ENCODE measurements at regions of chr15 and their contacts with region 1.

Region 1: GRCh38 chr15:90603893-90604292 is 74.2 kb downstream of the CRTC3 start:
- DNase-seq: no peak
- CTCF ChIP-seq: peak; percentile 31

Region 2: DNA sequence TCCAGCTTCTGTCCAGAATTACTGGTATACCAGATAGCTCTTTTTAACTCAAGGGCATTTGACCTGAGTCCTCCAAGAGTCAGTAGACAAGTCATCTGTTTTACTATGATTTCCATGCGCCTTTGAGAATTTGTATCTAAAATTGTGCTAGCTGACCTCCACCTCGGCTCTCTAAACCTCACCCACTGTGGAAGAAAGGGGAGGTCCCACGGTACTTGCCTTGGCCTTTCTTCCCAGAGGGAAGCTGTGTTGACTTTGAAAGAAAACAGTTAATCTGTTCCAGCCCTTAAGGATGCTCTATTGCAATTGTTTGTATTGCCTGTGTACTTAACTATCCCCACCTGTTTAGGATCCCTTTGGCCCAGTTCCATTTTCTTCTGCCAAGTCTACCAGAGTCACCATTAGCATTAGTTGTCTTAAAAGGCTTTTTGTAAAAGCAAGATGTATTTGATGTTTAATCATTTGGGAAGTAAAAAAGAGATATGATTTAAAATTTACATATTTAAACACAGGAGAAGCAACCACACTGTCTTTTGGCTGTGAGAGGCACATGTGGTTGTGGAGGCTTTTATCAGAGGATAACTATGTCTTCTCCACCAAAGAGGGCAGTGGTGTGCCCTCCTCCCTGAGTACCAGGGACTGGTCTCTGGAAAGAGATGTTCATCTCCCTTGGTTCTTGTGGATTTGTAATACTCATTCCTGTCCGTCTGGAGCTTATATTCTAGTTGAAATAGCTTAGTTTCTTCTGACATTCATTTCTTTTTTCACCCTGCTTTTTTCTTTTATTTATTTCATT is 14.6 kb after region 1 on chr15:
- CTCF ChIA-PET with region 1: interaction called, 13 read pairs
- POLR2A ChIA-PET with region 1: no interaction called
- DNase-seq: no peak
- CTCF ChIP-seq: no peak